ENCODE measurements at regions of chr1 and their contacts with region 1.

Region 1: DNA sequence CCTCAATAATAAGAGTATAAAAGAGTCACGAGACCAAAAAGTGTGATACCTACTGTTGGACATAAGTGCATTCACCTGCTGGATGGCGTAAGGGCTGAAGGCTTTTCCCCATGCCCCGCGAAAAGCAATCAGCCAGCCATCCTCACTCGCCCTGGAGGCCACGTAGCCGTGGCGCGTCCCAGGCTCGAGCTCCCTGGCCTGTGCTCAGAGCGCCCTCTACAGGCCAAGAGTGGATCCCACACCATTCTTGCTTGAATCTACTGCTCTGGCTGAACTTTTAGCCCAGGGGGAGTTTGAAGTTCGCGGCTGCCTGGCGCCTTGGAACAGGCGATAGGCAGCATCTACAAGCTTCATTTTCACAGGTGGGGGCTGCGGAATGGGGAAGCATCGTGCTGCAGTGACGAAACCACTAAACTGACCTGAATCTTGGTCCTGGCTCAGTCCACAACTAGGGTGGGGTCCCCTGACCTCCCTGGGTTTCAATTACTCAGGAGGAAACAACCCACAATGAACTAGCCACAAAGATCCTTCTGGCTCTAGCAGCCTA is 70.3 kb upstream of the SERBP1 start:
- DNase-seq: peak; percentile 93
- H3K4me3 ChIP-seq: no peak overlapping the region
- H3K27ac ChIP-seq: no peak overlapping the region
- H3K4me1 ChIP-seq: peaks cover 0 to 8% (median 6%) of the 10 kb centered on the region in 6 donors
- H3K27me3 ChIP-seq: peaks cover 0 to 12% (median 3%) of the 10 kb centered on the region in 7 donors
- CTCF ChIP-seq: peak; percentile 88 to 96 (median 93)
- POLR2A ChIP-seq: no peak

Region 2: GRCh38 chr1:66944330-66945274 is 555.9 kb before region 1 on chr1:
- intact Hi-C with region 1: no loop called
- DNase-seq: peak; percentile 68
- H3K4me3 ChIP-seq: no peak overlapping the region
- H3K27ac ChIP-seq: peak overlapping the region in 5 of 8 donors; percentile 14 to 56 (median 25)
- H3K4me1 ChIP-seq: peaks cover 4 to 93% (median 39%) of the 10 kb centered on the region in 6 donors
- H3K27me3 ChIP-seq: no peaks in the 10 kb centered on the region
- CTCF ChIP-seq: no peak
- POLR2A ChIP-seq: no peak

Region 3: GRCh38 chr1:67239738-67240137 is 260.7 kb before region 1 on chr1:
- intact Hi-C with region 1: loop called (anchors 5 kb)
- DNase-seq: no peak
- H3K4me3 ChIP-seq: no peak overlapping the region
- H3K27ac ChIP-seq: no peak overlapping the region
- H3K4me1 ChIP-seq: no peaks in the 10 kb centered on the region
- H3K27me3 ChIP-seq: no peaks in the 10 kb centered on the region
- CTCF ChIP-seq: no peak
- POLR2A ChIP-seq: no peak

Region 4: DNA sequence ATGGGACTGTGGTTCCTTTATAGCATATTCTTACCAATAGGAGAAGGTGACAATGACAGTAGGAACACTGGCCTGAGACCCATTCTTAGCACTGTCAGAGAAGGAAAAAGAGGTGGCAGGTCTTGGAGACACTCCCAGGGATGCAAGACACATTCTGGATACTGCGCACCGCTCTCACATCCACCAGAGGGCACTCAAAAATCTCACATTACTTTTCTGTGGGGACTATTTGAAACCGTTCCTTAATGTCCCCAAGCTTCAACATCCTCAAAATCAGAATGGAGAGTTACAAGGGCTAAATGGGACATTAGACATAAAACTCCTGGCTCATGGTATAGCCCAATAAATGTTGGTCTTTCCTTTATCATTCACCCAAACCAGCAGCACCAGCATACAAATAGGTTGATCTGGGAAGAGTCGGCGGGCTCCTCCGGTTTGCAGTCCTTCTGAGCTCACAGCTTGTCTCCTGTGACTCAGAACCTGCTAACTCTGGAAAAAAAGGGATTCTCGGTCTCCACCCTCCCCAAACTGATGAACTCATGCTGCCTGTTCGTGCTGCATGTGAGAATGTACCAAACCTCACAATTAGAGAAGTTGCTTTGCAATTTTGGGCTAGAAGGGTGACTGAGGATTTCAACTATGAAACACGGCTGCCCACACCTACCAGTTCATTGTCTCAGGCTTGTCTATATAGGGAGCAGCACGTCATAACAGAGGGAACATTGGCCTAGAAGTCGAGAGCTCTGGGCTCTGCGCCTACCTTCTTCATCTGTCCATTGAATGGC is 152.6 kb before region 1 on chr1:
- intact Hi-C with region 1: loop called (anchors 2 kb)
- DNase-seq: no peak
- H3K4me3 ChIP-seq: no peak overlapping the region
- H3K27ac ChIP-seq: no peak overlapping the region
- H3K4me1 ChIP-seq: no peaks in the 10 kb centered on the region
- H3K27me3 ChIP-seq: no peaks in the 10 kb centered on the region
- CTCF ChIP-seq: peak; percentile 18 to 69 (median 49)
- POLR2A ChIP-seq: no peak

Region 5: GRCh38 chr1:67572271-67573221 is 72.1 kb after region 1 on chr1:
- intact Hi-C with region 1: no loop called
- DNase-seq: no peak
- H3K4me3 ChIP-seq: no peak overlapping the region
- H3K27ac ChIP-seq: no peak overlapping the region
- H3K4me1 ChIP-seq: no peaks in the 10 kb centered on the region
- H3K27me3 ChIP-seq: no peaks in the 10 kb centered on the region
- CTCF ChIP-seq: no peak
- POLR2A ChIP-seq: no peak

Measured in spleen (tissue), 13 donors.